ENCODE measurements at regions of chr1 and their contacts with region 1.

Region 1: GRCh38 chr1:206734499-206735142 is 36.0 kb upstream of the IL19 start:
- DNase-seq: peak; percentile 64 to 82 (median 71)
- H3K4me3 ChIP-seq: no peak overlapping the region
- H3K4me3 Mint-ChIP-seq: peak overlapping the region in 3 of 8 donors; percentile 23 to 76 (median 54)
- H3K27ac ChIP-seq: peak overlapping the region; percentile 53
- H3K27ac Mint-ChIP-seq: peak overlapping the region; percentile 92 to 97 (median 94)
- H3K4me1 ChIP-seq: peaks cover 56% of the 10 kb centered on the region
- H3K4me1 Mint-ChIP-seq: peaks cover 47 to 56% (median 52%) of the 10 kb centered on the region in 4 donors
- H3K27me3 ChIP-seq: no peaks in the 10 kb centered on the region
- H3K27me3 Mint-ChIP-seq: no peaks in the 10 kb centered on the region

Region 2: GRCh38 chr1:206503591-206504362 is 230.8 kb before region 1 on chr1:
- CTCF ChIA-PET with region 1: no interaction called
- POLR2A ChIA-PET with region 1: no interaction called
- intact Hi-C with region 1: no loop called
- DNase-seq: no peak
- H3K4me3 ChIP-seq: no peak overlapping the region
- H3K4me3 Mint-ChIP-seq: no peak overlapping the region
- H3K27ac ChIP-seq: no peak overlapping the region
- H3K27ac Mint-ChIP-seq: peak overlapping the region; percentile 3 to 75 (median 57)
- H3K4me1 ChIP-seq: peaks cover 45% of the 10 kb centered on the region
- H3K4me1 Mint-ChIP-seq: peaks cover 17 to 56% (median 32%) of the 10 kb centered on the region in 4 donors
- H3K27me3 ChIP-seq: peaks cover 4% of the 10 kb centered on the region
- H3K27me3 Mint-ChIP-seq: peaks cover 0 to 3% of the 10 kb centered on the region in 2 donors

Region 3: DNA sequence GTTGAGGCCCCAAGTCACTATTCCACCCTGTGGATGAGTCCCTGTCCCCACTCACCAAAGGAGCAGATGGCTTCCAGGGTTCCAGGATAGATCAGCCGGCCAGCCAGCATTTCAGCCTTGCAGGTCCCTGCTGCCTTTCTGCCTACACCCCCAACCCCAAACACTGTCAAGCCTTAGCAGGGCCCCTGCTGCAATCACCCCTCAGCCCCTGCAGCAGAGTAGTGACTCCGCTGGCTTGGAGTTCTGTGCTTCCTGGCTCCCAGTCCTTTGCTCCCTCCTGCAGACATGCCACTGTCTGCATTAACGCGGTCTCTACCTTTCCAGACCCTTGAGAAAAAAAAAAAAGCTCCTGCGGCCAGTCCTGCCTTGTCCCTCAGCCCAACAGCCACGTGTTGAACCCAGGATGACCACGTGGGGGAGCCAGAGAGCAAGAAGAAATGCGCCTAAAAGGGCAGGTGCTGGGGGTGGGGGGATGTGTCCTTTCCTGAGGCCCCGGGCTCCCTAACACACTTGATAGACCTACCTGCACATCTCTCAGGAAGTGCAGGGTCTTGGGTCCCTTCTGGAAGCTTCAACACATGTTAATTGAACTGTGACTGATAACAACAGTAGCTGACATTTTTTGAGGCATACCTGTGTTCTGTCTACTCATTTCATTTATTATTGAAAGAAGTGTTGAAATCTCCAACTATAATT is 189.9 kb before region 1 on chr1:
- CTCF ChIA-PET with region 1: no interaction called
- POLR2A ChIA-PET with region 1: no interaction called
- intact Hi-C with region 1: no loop called
- DNase-seq: peak; percentile 66 to 83 (median 76)
- H3K4me3 ChIP-seq: no peak overlapping the region
- H3K4me3 Mint-ChIP-seq: peak overlapping the region in 2 of 8 donors; percentile 6 to 52
- H3K27ac ChIP-seq: no peak overlapping the region
- H3K27ac Mint-ChIP-seq: peak overlapping the region in 5 of 7 donors; percentile 27 to 77 (median 60)
- H3K4me1 ChIP-seq: peaks cover 10% of the 10 kb centered on the region
- H3K4me1 Mint-ChIP-seq: peaks cover 5 to 15% (median 11%) of the 10 kb centered on the region in 4 donors
- H3K27me3 ChIP-seq: no peaks in the 10 kb centered on the region
- H3K27me3 Mint-ChIP-seq: no peaks in the 10 kb centered on the region

Region 4: DNA sequence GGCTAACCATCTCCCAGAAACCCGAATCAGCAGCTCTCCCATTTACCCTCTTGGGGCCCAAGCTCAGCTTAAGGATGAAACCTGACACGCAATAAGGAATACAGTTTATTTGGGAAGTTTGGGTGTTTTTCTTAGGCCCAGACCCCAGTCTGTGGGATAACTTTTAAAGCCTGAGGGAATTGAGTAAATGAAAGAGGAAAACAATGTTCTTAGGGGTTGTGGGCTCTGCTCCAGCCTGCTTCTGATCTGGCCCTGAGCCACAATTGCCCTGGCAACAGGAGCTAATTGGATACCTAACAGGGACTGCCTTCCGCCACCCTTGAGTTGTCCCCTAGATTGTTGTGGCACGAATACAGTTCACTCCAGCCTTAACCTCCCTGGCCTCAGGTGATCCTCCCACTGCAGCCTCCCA is 79.1 kb before region 1 on chr1:
- CTCF ChIA-PET with region 1: no interaction called
- POLR2A ChIA-PET with region 1: no interaction called
- intact Hi-C with region 1: no loop called
- DNase-seq: no peak
- H3K4me3 ChIP-seq: no peak overlapping the region
- H3K4me3 Mint-ChIP-seq: no peak overlapping the region
- H3K27ac ChIP-seq: no peak overlapping the region
- H3K27ac Mint-ChIP-seq: no peak overlapping the region
- H3K4me1 ChIP-seq: peaks cover 10% of the 10 kb centered on the region
- H3K4me1 Mint-ChIP-seq: peaks cover 0 to 2% (median 1%) of the 10 kb centered on the region in 4 donors
- H3K27me3 ChIP-seq: peaks cover 3% of the 10 kb centered on the region
- H3K27me3 Mint-ChIP-seq: peaks cover 11 to 17% of the 10 kb centered on the region in 2 donors

Region 5: DNA sequence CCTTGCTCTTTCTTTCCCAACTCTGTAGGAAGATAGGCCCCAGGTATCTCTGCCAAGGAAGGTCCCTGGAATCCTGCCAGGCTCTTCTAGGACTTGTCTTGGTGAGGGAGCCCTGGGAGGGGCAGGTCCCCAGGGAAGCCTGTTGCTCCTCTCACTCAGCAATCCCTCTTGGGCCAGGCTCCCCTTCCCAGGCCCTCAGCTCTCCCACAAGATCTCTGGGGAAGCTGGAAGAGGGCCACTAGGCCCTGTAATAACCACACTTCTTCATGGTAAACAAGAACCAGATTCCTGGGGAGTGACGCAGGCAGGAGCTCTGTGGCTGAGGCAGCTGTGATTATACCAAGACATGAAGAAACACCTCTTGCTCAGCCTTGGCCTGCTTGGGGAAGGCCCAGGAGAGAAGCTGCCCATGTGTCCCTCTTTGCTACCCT is 59.9 kb before region 1 on chr1:
- CTCF ChIA-PET with region 1: no interaction called
- POLR2A ChIA-PET with region 1: no interaction called
- intact Hi-C with region 1: no loop called
- DNase-seq: no peak
- H3K4me3 ChIP-seq: no peak overlapping the region
- H3K4me3 Mint-ChIP-seq: no peak overlapping the region
- H3K27ac ChIP-seq: no peak overlapping the region
- H3K27ac Mint-ChIP-seq: no peak overlapping the region
- H3K4me1 ChIP-seq: peaks cover 9% of the 10 kb centered on the region
- H3K4me1 Mint-ChIP-seq: peaks cover 0 to 10% (median 3%) of the 10 kb centered on the region in 4 donors
- H3K27me3 ChIP-seq: no peaks in the 10 kb centered on the region
- H3K27me3 Mint-ChIP-seq: peaks cover 0 to 1% of the 10 kb centered on the region in 2 donors

Region 6: GRCh38 chr1:206766251-206766856 is 31.7 kb after region 1 on chr1:
- CTCF ChIA-PET with region 1: interaction called, 91 read pairs
- POLR2A ChIA-PET with region 1: interaction called, 63 read pairs
- intact Hi-C with region 1: loop called (anchors 2 kb)
- DNase-seq: peak; percentile 67 to 85 (median 74)
- H3K4me3 ChIP-seq: no peak overlapping the region
- H3K4me3 Mint-ChIP-seq: peak overlapping the region; percentile 61 to 82 (median 76)
- H3K27ac ChIP-seq: no peak overlapping the region
- H3K27ac Mint-ChIP-seq: peak overlapping the region; percentile 82 to 95 (median 91)
- H3K4me1 ChIP-seq: peaks cover 67% of the 10 kb centered on the region
- H3K4me1 Mint-ChIP-seq: peaks cover 48 to 72% (median 61%) of the 10 kb centered on the region in 4 donors
- H3K27me3 ChIP-seq: no peaks in the 10 kb centered on the region
- H3K27me3 Mint-ChIP-seq: no peaks in the 10 kb centered on the region

Region 7: DNA sequence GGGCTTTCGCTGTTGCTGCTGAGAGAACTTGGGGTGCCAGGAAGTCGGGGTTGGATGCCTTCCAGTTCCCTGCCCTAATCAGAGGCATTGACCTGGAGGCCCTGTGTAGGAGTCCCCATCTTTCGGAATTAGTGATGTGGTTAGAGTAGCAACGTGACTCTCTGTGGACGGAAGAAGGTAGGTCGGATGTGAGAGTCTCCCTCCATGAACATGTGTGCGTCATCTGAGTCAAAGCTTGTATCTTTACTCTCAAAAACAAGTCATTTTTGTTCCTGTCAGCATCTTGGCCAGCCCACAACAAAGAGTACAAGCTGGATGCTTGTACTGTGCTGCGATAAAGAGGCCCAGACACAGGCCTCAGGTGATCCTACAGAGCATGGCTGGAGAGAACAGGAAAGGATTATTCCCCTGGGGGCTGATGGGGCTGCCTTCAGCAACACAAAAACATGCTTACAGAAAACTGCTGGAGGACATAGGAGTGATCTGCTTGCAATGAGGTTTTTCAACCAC is 68.7 kb after region 1 on chr1:
- CTCF ChIA-PET with region 1: interaction called, 351 read pairs
- POLR2A ChIA-PET with region 1: interaction called, 158 read pairs
- intact Hi-C with region 1: loop called (anchors 1 kb)
- DNase-seq: peak; percentile 91 to 96 (median 94)
- H3K4me3 ChIP-seq: peak overlapping the region in 1 of 2 donors; percentile 6
- H3K4me3 Mint-ChIP-seq: peak overlapping the region; percentile 4 to 74 (median 56)
- H3K27ac ChIP-seq: peak overlapping the region; percentile 67
- H3K27ac Mint-ChIP-seq: peak overlapping the region; percentile 89 to 99 (median 97)
- H3K4me1 ChIP-seq: peaks cover 60% of the 10 kb centered on the region
- H3K4me1 Mint-ChIP-seq: peaks cover 45 to 83% (median 66%) of the 10 kb centered on the region in 4 donors
- H3K27me3 ChIP-seq: no peaks in the 10 kb centered on the region
- H3K27me3 Mint-ChIP-seq: no peaks in the 10 kb centered on the region

Region 8: DNA sequence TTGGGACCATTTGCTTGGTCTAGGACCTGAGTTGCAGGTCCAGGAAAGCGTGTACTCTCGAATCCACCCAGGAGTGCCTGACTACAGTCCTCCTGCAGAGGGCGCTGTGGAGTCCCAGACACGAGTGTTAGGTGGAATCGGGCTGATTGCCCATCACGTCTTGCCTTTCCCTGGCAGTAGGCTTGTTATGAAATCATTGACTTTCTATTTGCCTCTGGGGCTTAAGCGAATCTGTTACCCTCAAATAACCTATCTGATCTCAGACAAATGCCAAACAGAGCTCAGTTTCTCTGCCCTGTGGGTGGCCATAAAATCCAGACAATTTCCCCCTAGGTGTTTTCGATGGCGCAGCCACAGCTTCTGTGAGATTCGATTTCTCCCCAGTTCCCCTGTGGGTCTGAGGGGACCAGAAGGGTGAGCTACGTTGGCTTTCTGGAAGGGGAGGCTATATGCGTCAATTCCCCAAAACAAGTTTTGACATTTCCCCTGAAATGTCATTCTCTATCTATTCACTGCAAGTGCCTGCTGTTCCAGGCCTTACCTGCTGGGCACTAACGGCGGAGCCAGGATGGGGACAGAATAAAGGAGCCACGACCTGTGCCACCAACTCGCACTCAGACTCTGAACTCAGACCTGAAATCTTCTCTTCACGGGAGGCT is 130.5 kb after region 1 on chr1 and contains the start of gene IL20:
- CTCF ChIA-PET with region 1: interaction called, 10 read pairs
- POLR2A ChIA-PET with region 1: no interaction called
- intact Hi-C with region 1: loop called (anchors 2 kb)
- DNase-seq: peak; percentile 73 to 79 (median 77)
- H3K4me3 ChIP-seq: no peak within 1 kb of the TSS
- H3K4me3 Mint-ChIP-seq: peak within 1 kb of the TSS in 1 of 8 donors; percentile 6
- H3K27ac ChIP-seq: no peak within 1 kb of the TSS
- H3K27ac Mint-ChIP-seq: peak within 1 kb of the TSS in 2 of 7 donors; percentile 15 to 55
- H3K4me1 ChIP-seq: no peaks in the 10 kb centered on the region
- H3K4me1 Mint-ChIP-seq: peaks cover 0 to 5% (median 4%) of the 10 kb centered on the region in 4 donors
- H3K27me3 ChIP-seq: no peaks in the 10 kb centered on the region
- H3K27me3 Mint-ChIP-seq: peaks cover 16% of the 10 kb centered on the region in 2 donors
- total RNA-seq, gene IL20: not detected

Region 9: DNA sequence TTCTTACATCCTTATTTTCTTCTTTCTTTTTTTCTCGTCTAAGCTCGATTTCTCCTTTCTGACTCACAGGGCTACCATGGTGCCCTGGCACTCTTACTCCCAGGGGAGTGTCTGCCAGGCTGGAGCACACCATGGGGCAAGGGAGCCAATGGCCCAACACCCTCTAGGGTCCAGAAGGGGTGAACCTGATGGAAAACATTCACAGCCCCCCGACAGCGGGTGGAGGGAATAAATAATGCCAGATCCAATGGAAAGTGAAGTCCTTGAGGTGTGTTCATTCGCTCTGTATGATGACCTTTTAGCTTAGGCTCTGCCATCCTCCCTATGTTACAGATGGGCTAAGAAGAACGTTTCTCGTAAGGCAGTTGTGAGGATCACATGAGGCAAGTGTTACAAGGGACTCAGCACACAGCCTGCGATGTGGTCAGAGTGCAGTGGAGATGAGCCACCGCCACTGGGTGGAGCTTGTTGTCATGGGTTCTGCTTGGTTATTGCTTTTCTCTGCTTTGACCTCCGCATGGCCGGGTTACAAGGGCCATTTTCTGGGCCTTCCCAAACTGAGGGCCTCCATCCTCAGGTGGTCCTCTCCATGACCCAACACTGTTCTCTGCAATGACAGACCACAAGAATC is 190.6 kb after region 1 on chr1:
- CTCF ChIA-PET with region 1: interaction called, 17 read pairs
- POLR2A ChIA-PET with region 1: interaction called, 12 read pairs
- intact Hi-C with region 1: no loop called
- DNase-seq: peak; percentile 42 to 61 (median 55)
- H3K4me3 ChIP-seq: no peak overlapping the region
- H3K4me3 Mint-ChIP-seq: no peak overlapping the region
- H3K27ac ChIP-seq: no peak overlapping the region
- H3K27ac Mint-ChIP-seq: no peak overlapping the region
- H3K4me1 ChIP-seq: peaks cover 56% of the 10 kb centered on the region
- H3K4me1 Mint-ChIP-seq: peaks cover 13 to 27% (median 25%) of the 10 kb centered on the region in 4 donors
- H3K27me3 ChIP-seq: no peaks in the 10 kb centered on the region
- H3K27me3 Mint-ChIP-seq: no peaks in the 10 kb centered on the region